Ovary (tissue), 10 donors: ENCODE measurements at regions of chr5 and their contacts with region 1.

Region 1: GRCh38 chr5:44774279-44774880 is 34.4 kb upstream of the MRPS30 start:
- DNase-seq: peak in 2 of 5 donors; percentile 19 to 22
- H3K4me3 ChIP-seq: no peak overlapping the region
- H3K27ac ChIP-seq: no peak overlapping the region
- H3K4me1 ChIP-seq: no peaks in the 10 kb centered on the region
- H3K27me3 ChIP-seq: no peaks in the 10 kb centered on the region
- CTCF ChIP-seq: peak in 2 of 3 donors; percentile 61 to 73
- EP300 ChIP-seq: no peak
- POLR2A ChIP-seq: no peak

Region 2: DNA sequence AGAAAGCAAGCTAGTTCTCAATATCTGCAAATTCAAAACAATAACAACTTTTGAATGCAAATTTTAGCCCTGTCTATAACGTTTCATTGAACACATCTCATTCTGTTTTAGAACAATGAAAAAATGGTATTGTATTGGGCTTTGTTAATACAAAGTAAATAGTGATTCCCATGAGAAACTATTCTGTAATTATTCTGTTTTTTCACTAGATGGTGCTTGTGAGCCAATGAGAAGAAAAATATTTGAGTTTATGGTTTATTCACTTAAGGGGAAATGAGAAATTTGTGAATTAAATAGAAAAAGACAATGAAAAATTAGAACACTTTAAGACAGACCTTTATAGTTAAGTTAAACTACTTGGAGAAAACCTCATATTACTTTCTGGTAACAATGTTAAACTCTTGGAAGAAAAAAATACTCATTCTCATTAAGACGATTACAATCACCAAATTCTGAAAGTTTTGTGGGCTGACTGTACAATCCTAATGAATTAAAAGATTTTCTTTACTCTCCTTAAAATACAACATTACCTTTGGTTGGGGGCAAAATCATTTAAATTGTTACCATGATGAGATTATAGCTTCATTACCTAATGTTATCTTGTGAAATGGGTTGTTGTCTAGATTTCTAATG is 1044.4 kb before region 1 on chr5:
- intact Hi-C with region 1: loop called in 3 of 4 experiments (anchors 5 to 10 kb)
- DNase-seq: no peak
- H3K4me3 ChIP-seq: no peak overlapping the region
- H3K27ac ChIP-seq: no peak overlapping the region
- H3K4me1 ChIP-seq: no peaks in the 10 kb centered on the region
- H3K27me3 ChIP-seq: no peaks in the 10 kb centered on the region
- CTCF ChIP-seq: peak in 2 of 3 donors; percentile 28 to 41
- EP300 ChIP-seq: no peak
- POLR2A ChIP-seq: no peak

Region 3: GRCh38 chr5:44497606-44498005 is 276.8 kb before region 1 on chr5:
- intact Hi-C with region 1: loop called in 1 of 4 experiments (anchors 5 kb)
- DNase-seq: no peak
- H3K4me3 ChIP-seq: no peak overlapping the region
- H3K27ac ChIP-seq: no peak overlapping the region
- H3K4me1 ChIP-seq: no peaks in the 10 kb centered on the region
- H3K27me3 ChIP-seq: no peaks in the 10 kb centered on the region
- CTCF ChIP-seq: no peak
- EP300 ChIP-seq: no peak
- POLR2A ChIP-seq: no peak

Region 4: DNA sequence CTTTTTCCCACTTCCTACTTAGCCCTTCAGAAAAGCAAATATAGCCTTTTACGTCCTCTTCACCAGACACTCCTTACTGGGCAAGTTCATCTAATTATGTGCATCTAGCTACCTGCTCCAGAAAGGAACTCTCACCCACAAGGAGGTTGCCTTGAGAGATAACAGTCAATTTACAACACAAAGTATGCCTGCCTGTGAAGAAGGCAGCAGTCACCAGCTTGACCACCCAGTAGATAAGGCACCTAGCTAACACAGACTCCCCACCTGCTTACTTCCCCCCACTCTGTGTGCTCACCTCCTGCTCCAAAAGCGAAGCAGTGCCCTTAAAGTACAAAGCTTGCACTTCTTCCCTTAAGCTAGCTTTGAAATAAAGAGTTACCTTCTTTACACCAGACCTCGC is 77.4 kb before region 1 on chr5:
- intact Hi-C with region 1: no loop called
- DNase-seq: no peak
- H3K4me3 ChIP-seq: no peak overlapping the region
- H3K27ac ChIP-seq: no peak overlapping the region
- H3K4me1 ChIP-seq: no peaks in the 10 kb centered on the region
- H3K27me3 ChIP-seq: no peaks in the 10 kb centered on the region
- CTCF ChIP-seq: no peak
- EP300 ChIP-seq: no peak
- POLR2A ChIP-seq: no peak